ENCODE measurements at regions of chr10 and their contacts with region 1.

Region 1: DNA sequence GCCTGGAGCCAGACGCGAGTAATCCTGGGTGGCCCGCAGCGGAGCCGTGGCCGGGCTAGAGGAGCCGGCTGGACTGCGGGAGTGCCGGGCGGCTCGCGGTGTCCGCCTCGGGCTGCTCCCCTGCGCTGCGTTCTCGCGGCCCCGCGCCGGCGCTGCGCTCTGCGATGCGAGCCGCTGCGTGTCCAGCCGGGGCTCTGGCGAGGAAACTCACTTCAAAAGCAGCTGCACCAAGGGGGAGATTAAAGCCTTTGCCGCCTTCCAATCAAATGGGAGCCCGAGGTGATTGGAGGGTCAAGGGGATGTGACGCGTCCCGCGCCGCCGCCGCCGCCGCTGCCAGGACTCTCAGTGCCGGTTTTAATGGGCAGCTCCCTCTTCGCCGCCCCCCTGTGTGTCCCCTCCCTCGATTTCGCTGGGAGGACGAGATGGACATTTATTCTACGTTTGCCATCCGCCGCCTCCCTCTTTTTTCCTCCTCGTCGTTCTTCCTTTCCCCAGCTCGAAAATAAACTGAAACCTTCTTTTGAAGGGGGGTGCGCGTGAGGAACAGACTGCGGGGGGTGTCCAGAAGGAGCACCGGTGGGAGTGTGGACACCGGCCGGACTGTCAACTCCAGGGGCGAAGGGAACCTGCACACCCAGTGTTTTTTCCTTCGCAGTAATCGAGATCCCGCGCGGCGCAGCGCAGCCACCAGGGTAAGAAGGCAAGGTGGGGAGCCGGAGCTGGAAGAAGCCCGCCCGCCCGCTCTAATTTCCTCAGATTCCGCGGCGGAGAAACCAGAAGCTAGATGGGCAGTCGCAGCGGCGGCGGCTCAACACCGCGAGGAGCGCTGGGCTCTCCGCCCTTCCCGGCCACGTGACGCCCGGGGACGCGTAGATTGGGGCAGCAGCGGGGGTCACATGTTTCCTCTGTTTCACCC is at the start of gene ZNF503:
- DNase-seq: peak; percentile 27
- ATAC-seq: peak; percentile 82
- H3K4me3 ChIP-seq: peak within 1 kb of the TSS; percentile 55
- H3K27ac ChIP-seq: no peak within 1 kb of the TSS
- H3K4me1 ChIP-seq: no peaks in the 10 kb centered on the region; the same call in 1 of the 2 replicates
- H3K27me3 ChIP-seq: peaks cover 7 to 10% of the 10 kb centered on the region in 2 experiments
- CTCF ChIP-seq: no peak
- EP300 ChIP-seq: no peak
- POLR2A ChIP-seq: 0 out of 2 replicates have a peak, but pooled peaks have one; percentile 25
- RAD21 ChIP-seq: no peak
- polyA plus RNA-seq, gene ZNF503: 0.05 to 0.11 TPM

Region 2: DNA sequence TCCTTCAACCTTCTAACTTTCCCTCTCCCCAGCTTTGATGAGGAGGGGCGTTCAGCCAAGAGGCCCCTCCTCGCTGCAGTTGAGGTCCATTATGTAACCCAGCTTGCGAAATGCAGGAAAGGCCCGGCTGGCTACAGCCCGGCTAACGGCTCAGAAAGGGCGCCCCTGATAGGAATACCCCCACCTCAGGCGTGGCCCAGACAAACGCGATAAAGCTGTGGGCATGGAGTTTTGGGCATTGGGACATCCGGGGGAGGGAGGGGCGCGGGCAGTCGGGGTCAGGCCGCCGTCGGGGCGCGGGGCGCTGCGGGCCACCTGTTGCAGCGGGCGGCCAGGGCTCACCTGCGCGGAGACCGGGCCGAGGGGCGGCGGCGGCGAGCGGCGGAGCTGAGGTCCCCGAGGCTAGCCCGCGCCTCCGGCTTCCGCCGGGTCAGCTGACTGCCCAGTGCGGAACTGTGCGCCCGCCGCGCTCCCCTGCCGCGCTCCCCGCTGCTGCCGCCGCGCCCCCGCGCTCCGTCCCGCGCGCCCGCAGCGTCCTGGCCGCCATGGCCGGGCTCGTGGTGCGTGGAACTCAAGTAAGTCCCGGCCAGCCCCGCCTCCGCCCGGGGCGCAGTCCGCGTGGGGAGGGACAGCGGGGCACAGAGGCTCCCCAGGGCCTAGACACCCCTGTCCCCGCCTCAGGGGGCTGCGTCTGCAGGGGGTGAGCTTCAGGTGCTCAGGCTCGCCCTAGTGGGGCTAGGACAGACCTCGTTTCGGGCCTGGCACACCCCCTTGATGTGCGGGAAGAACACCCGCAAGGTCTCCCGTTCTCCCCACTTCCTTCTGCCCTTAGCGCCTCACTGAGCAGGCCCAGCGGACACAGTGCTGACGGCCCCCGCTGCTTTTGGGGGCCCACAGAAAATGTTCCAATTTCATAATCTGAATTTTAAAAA is 29.6 kb after region 1 on chr10 and contains the start of gene LRMDA:
- CTCF ChIA-PET with region 1: interaction called, 4 read pairs
- POLR2A ChIA-PET with region 1: interaction called, 4 read pairs
- RAD21 ChIA-PET with region 1: interaction called, 7 read pairs
- SMC1A ChIA-PET with region 1: interaction called, 10 read pairs
- in situ Hi-C with region 1: no loop called
- intact Hi-C with region 1: no loop called
- DNase-seq: no peak
- ATAC-seq: peak; percentile 64
- H3K4me3 ChIP-seq: no peak within 1 kb of the TSS
- H3K27ac ChIP-seq: no peak within 1 kb of the TSS
- H3K4me1 ChIP-seq: no peaks in the 10 kb centered on the region
- H3K27me3 ChIP-seq: peaks cover 0 to 12% of the 10 kb centered on the region in 2 experiments; a peak in 2 of 4 replicates
- CTCF ChIP-seq: no peak
- EP300 ChIP-seq: no peak
- POLR2A ChIP-seq: no peak
- RAD21 ChIP-seq: no peak
- polyA plus RNA-seq, gene LRMDA: 0.07 TPM in 1 of 2 experiments, not detected in the other

Region 3: DNA sequence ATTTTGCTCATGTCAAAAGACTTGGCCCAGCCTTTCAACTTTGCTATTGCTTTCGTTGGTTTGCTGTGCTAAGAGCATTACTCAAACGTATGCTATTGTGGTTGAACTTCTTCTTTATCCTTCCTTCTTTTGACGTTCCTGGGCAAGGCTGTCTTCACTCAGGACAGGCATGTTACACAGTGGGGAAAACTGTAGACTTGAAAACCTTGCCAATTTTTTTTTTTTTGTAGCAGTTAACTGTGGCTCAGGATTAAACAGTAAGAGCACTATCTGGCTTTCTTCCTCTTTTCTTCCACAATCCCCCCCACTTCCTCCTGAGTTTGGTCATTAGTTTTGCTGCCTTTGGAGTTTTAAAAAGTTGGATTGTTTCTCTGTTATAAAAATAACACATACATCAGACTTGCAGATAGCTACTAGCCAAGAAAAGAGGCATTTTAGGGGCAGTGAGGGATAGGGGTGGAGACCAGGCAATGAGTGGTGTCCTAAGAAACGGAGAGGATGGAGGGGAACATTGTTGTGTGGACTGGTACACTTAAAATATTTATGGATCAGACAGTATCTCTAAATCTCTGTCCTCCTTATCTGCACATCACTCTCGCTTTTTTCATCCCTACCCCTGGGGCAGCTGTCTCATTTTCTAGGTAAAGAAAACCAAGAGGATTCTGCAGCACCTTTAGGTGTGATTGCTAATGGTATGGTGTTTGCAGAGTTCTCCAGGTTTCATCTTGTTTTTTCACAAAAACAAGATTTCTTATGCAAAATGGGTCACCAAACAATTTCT is 211.3 kb after region 1 on chr10:
- CTCF ChIA-PET with region 1: interaction called, 7 read pairs
- POLR2A ChIA-PET with region 1: interaction called, 5 read pairs
- RAD21 ChIA-PET with region 1: interaction called, 27 read pairs
- SMC1A ChIA-PET with region 1: interaction called, 8 read pairs
- in situ Hi-C with region 1: no loop called
- intact Hi-C with region 1: loop called (anchors 2 kb)
- DNase-seq: peak; percentile 50
- ATAC-seq: peak; percentile 43
- H3K4me3 ChIP-seq: no peak overlapping the region
- H3K27ac ChIP-seq: peak overlapping the region; percentile 5; the same call in 1 of the 2 replicates
- H3K4me1 ChIP-seq: peaks cover 12% of the 10 kb centered on the region
- H3K27me3 ChIP-seq: no peaks in the 10 kb centered on the region
- CTCF ChIP-seq: no peak
- EP300 ChIP-seq: peak in 1 of 2 experiments; percentile 53; a peak in 1 of 4 replicates
- POLR2A ChIP-seq: no peak
- RAD21 ChIP-seq: no peak

Region 4: GRCh38 chr10:75651417-75651816 is 249.6 kb after region 1 on chr10:
- CTCF ChIA-PET with region 1: interaction called, 38 read pairs
- POLR2A ChIA-PET with region 1: interaction called, 3 read pairs
- RAD21 ChIA-PET with region 1: interaction called, 22 read pairs
- SMC1A ChIA-PET with region 1: interaction called, 19 read pairs
- in situ Hi-C with region 1: no loop called
- intact Hi-C with region 1: loop called (anchors 10 kb)
- DNase-seq: no peak
- ATAC-seq: no peak
- H3K4me3 ChIP-seq: no peak overlapping the region
- H3K27ac ChIP-seq: no peak overlapping the region
- H3K4me1 ChIP-seq: no peaks in the 10 kb centered on the region
- H3K27me3 ChIP-seq: no peaks in the 10 kb centered on the region; a peak in 1 of 4 replicates
- CTCF ChIP-seq: peak in 2 of 3 experiments; percentile 7 to 30; a peak in 2 of 6 replicates
- EP300 ChIP-seq: no peak
- POLR2A ChIP-seq: no peak
- RAD21 ChIP-seq: peak; percentile 21; the same call in 1 of the 2 replicates

Region 5: GRCh38 chr10:75910032-75910431 is 508.2 kb after region 1 on chr10:
- CTCF ChIA-PET with region 1: interaction called, 10 read pairs
- POLR2A ChIA-PET with region 1: no interaction called
- RAD21 ChIA-PET with region 1: interaction called, 10 read pairs
- SMC1A ChIA-PET with region 1: interaction called, 6 read pairs
- in situ Hi-C with region 1: no loop called
- intact Hi-C with region 1: loop called (anchors 2 kb)
- DNase-seq: no peak
- ATAC-seq: no peak
- H3K4me3 ChIP-seq: no peak overlapping the region
- H3K27ac ChIP-seq: no peak overlapping the region
- H3K4me1 ChIP-seq: no peaks in the 10 kb centered on the region
- H3K27me3 ChIP-seq: peaks cover 0 to 2% of the 10 kb centered on the region in 2 experiments; a peak in 1 of 4 replicates
- CTCF ChIP-seq: peak; percentile 16 to 29 (median 18); a peak in 3 of 6 replicates
- EP300 ChIP-seq: no peak
- POLR2A ChIP-seq: no peak
- RAD21 ChIP-seq: no peak

Region 6: GRCh38 chr10:76086761-76087639 is 685.2 kb after region 1 on chr10:
- CTCF ChIA-PET with region 1: interaction called, 16 read pairs
- POLR2A ChIA-PET with region 1: interaction called, 5 read pairs
- RAD21 ChIA-PET with region 1: interaction called, 5 read pairs
- SMC1A ChIA-PET with region 1: interaction called, 4 read pairs
- in situ Hi-C with region 1: no loop called
- intact Hi-C with region 1: no loop called
- DNase-seq: peak; percentile 4
- ATAC-seq: peak; percentile 92
- H3K4me3 ChIP-seq: no peak overlapping the region
- H3K27ac ChIP-seq: no peak overlapping the region
- H3K4me1 ChIP-seq: no peaks in the 10 kb centered on the region
- H3K27me3 ChIP-seq: no peaks in the 10 kb centered on the region; a peak in 1 of 4 replicates
- CTCF ChIP-seq: peak; percentile 39 to 68 (median 63)
- EP300 ChIP-seq: no peak
- POLR2A ChIP-seq: no peak
- RAD21 ChIP-seq: peak; percentile 17; the same call in 1 of the 2 replicates

Region 7: DNA sequence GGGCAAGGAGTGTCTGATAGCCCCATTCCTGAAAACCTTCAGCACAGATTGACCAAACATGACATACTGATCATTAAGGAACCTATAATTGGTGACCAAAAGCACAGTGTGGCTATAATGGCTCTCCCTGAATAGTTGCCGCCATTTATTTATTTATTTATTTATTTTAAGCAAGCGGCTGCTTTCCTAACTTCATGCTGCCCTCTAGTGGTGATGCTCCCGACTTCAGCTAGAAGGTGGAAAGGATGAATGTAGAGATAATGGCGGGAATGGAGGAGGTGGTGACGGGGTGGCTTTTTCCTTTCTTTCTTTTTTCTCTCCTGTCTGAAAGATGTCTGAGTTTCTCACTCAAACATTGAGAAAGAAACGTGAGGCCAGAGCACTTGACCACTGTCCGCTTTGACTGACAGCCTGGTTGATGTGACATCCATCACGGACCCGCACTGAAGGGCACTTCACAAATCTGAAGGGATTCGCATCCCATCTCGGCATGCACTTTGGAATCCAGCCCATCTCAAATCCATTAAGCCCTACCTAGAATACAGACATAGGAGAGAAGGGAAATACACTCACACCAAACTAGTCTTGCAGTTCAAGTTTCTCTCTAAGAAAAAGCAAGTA is 1145.6 kb after region 1 on chr10:
- CTCF ChIA-PET with region 1: no interaction called
- POLR2A ChIA-PET with region 1: no interaction called
- RAD21 ChIA-PET with region 1: no interaction called
- SMC1A ChIA-PET with region 1: interaction called, 3 read pairs
- in situ Hi-C with region 1: loop called (anchors 25 kb)
- intact Hi-C with region 1: no loop called
- DNase-seq: no peak
- ATAC-seq: peak; percentile 77
- H3K4me3 ChIP-seq: no peak overlapping the region
- H3K27ac ChIP-seq: no peak overlapping the region
- H3K4me1 ChIP-seq: no peaks in the 10 kb centered on the region
- H3K27me3 ChIP-seq: no peaks in the 10 kb centered on the region
- CTCF ChIP-seq: peak; percentile 62 to 65 (median 65)
- EP300 ChIP-seq: no peak
- POLR2A ChIP-seq: no peak
- RAD21 ChIP-seq: peak; percentile 79

Measured in GM12878 (cell line).